MCF 10A (cell line): ENCODE measurements at regions of chr22 and their contacts with region 1.

Region 1: DNA sequence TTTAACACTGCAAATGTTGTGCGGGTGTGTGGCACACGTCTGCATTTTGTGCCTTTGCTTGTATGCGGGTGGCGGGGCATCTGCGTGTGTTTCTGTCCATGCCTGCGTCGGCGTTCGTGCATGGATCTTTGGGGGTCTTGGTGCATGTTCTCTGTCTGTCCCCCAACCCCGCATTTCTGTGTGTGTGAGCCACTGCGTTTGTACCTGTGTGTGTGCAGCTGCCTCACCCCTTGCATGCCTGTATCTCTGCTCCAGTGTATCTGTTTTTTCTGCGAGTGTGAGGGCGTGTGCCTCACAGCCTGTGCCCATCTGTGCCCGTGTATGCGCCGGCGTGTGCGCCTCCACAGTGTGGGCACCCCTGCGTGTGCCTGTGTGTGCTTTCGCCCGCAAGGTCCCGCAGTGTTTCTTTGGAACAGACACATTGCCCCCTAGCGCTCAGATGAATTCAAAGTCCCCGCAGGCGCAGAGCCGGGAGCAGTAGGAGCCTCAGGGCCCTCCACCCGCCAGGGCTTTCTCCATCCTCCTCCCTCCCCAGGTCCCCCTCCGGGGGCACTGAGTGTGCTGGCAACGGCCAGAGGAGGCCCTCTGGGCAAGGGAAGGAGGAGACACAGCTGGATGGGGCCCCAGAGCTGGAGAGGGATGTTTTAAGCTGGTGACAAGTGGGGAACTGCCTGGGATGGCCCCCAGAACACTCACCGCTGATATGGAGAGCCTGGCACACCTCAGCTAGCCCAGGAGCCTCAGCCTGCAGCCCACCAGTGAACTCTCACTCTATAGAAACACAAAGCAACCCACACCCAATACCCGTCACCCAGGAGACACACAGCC is 3.1 kb upstream of the MN1 start:
- DNase-seq: peak; percentile 51
- H3K4me3 Mint-ChIP-seq: no peak overlapping the region
- H3K27ac Mint-ChIP-seq: no peak overlapping the region
- H3K4me1 Mint-ChIP-seq: peaks cover 11% of the 10 kb centered on the region
- H3K27me3 Mint-ChIP-seq: no peaks in the 10 kb centered on the region
- CTCF ChIP-seq: peak; percentile 28

Region 2: GRCh38 chr22:26672590-26673468 is 1131.9 kb before region 1 on chr22:
- CTCF ChIA-PET with region 1: no interaction called
- POLR2A ChIA-PET with region 1: no interaction called
- intact Hi-C with region 1: loop called (anchors 10 kb)
- DNase-seq: peak; percentile 94
- H3K4me3 Mint-ChIP-seq: peak overlapping the region; percentile 89
- H3K27ac Mint-ChIP-seq: peak overlapping the region; percentile 99
- H3K4me1 Mint-ChIP-seq: peaks cover 37% of the 10 kb centered on the region
- H3K27me3 Mint-ChIP-seq: no peaks in the 10 kb centered on the region
- CTCF ChIP-seq: peak; percentile 37

Region 3: GRCh38 chr22:26835929-26836528 is 968.7 kb before region 1 on chr22:
- CTCF ChIA-PET with region 1: no interaction called
- POLR2A ChIA-PET with region 1: no interaction called
- intact Hi-C with region 1: loop called (anchors 5 kb)
- DNase-seq: peak; percentile 67
- H3K4me3 Mint-ChIP-seq: no peak overlapping the region
- H3K27ac Mint-ChIP-seq: no peak overlapping the region
- H3K4me1 Mint-ChIP-seq: no peaks in the 10 kb centered on the region
- H3K27me3 Mint-ChIP-seq: peaks cover 73% of the 10 kb centered on the region
- CTCF ChIP-seq: peak; percentile 83

Region 4: DNA sequence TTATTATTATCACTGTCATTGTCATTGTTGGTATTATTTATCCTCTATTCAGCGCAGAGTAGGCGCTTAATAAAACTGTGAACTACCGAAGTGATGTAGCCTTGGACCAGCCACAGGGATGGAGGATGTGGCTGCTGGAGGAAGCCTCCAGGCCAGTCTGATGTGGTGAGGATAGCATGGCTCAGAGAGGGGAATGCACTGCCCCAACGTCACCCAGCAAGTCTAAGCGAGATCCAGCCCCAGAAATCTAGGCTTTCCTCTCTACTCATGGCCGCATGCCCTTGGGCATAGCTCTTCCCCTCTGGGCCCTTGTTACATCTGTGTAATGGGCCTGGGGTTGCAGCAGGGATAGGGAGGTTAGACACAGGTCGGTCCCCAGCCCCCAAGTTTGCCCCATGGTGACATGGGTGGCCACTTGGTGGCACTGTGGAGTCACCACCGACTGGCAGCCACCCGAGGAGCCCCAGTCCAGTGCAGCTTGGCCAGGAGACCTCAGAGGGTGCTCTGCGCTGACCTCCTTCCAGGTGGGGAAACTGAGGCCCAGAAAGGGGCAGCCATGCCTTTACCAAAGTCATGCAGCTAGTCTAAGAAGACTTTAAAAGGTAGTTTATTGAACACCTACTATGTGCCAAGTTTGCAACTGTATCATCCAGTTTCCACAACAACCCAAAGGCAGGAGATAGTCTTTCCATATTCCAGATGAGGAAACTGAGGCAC is 398.9 kb before region 1 on chr22:
- CTCF ChIA-PET with region 1: interaction called, 7 read pairs
- POLR2A ChIA-PET with region 1: no interaction called
- intact Hi-C with region 1: loop called (anchors 1 kb)
- DNase-seq: peak; percentile 69
- H3K4me3 Mint-ChIP-seq: no peak overlapping the region
- H3K27ac Mint-ChIP-seq: peak overlapping the region; percentile 70
- H3K4me1 Mint-ChIP-seq: peaks cover 16% of the 10 kb centered on the region
- H3K27me3 Mint-ChIP-seq: no peaks in the 10 kb centered on the region
- CTCF ChIP-seq: peak; percentile 87

Region 5: DNA sequence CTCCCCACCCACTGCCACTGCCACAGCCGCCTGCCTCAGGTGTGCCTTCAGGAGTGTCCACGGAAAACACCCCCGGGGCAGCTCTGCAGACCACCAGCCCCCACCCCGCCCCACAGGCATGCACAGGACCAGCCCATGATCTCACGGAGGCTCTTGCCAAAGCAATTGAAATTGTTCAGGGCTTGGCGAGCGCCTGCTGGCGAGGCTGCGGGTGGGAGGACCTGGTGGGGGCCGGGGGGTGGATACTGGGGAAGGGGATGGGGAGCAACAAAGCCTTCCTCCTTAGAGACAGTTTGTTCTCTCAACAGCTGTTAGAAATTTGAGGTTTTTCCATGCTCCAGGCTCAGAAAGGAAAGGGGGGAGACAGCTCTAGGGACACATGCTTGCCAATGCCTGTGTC is 277.8 kb before region 1 on chr22:
- CTCF ChIA-PET with region 1: no interaction called
- POLR2A ChIA-PET with region 1: no interaction called
- intact Hi-C with region 1: no loop called
- DNase-seq: no peak
- H3K4me3 Mint-ChIP-seq: no peak overlapping the region
- H3K27ac Mint-ChIP-seq: no peak overlapping the region
- H3K4me1 Mint-ChIP-seq: peaks cover 3% of the 10 kb centered on the region
- H3K27me3 Mint-ChIP-seq: no peaks in the 10 kb centered on the region
- CTCF ChIP-seq: no peak

Region 6: DNA sequence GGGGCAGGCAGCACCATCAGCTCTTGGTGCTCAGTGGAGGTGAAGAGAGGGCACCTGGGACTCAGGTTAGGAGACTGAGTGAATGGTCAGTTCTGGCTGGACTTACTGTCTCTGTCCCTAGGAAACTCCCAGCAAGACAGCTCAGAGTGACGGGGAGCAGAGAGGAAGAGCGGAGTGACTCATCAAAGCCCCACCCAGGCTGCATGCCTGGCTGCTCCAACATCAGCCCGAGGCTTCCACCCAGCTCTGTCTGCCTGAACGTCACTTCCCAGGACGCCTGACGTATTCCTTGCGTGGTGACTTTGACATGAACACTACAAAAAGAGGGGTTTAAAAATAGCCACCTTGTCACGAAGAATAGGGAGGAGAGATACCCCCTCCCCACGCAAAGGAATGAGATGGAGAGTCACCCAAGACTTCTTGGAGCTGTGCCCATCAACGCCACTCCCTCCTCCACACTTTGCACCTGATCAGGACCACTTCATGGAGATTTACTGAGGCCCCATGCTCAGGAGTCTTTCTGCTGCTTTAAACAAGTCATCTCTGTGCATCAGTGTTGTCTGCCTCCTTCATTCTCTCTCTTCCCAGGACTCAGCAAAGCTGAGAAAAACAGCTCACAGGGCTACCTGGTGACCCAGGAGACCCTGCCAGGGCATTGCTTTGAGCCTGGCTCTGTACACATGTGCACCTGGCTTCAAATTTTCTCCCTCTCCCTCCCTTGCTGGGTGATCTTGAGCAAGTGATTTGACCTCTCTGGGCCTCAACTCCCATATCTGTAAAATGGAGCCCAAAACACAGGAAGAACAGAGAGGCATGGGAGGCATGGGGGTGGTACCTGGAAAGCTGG is 86.3 kb before region 1 on chr22:
- CTCF ChIA-PET with region 1: interaction called, 4 read pairs
- POLR2A ChIA-PET with region 1: no interaction called
- intact Hi-C with region 1: loop called (anchors 1 kb)
- DNase-seq: peak; percentile 91
- H3K4me3 Mint-ChIP-seq: peak overlapping the region; percentile 24
- H3K27ac Mint-ChIP-seq: peak overlapping the region; percentile 98
- H3K4me1 Mint-ChIP-seq: peaks cover 30% of the 10 kb centered on the region
- H3K27me3 Mint-ChIP-seq: no peaks in the 10 kb centered on the region
- CTCF ChIP-seq: no peak

Region 7: DNA sequence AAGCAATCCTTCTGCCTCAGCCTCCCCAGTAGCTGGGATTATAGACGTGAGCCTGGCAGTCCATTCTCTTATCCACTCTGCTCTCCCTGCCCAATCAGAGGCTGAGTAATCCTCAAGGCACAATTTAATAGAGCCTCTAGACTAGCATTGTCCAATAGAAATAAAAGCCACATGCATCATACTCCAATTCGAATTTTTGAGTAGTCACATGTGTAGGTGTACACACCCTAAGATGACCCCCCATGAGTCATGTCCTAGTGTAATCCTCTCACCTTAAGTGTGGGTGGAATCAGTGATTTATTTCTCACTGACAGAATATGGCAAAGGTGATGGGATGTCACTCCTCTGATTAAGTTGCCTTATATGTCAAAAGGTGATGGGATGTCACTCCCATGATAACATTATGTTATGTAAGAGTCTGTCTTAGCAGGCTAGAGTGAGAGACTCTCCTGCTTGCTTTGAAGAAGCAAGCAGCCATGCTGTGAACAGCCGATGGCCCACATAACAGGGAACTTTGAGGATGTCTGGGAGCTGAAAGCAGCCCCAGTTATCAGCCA is 64.4 kb before region 1 on chr22:
- CTCF ChIA-PET with region 1: no interaction called
- POLR2A ChIA-PET with region 1: no interaction called
- intact Hi-C with region 1: no loop called
- DNase-seq: no peak
- H3K4me3 Mint-ChIP-seq: no peak overlapping the region
- H3K27ac Mint-ChIP-seq: no peak overlapping the region
- H3K4me1 Mint-ChIP-seq: no peaks in the 10 kb centered on the region
- H3K27me3 Mint-ChIP-seq: no peaks in the 10 kb centered on the region
- CTCF ChIP-seq: no peak

Region 8: DNA sequence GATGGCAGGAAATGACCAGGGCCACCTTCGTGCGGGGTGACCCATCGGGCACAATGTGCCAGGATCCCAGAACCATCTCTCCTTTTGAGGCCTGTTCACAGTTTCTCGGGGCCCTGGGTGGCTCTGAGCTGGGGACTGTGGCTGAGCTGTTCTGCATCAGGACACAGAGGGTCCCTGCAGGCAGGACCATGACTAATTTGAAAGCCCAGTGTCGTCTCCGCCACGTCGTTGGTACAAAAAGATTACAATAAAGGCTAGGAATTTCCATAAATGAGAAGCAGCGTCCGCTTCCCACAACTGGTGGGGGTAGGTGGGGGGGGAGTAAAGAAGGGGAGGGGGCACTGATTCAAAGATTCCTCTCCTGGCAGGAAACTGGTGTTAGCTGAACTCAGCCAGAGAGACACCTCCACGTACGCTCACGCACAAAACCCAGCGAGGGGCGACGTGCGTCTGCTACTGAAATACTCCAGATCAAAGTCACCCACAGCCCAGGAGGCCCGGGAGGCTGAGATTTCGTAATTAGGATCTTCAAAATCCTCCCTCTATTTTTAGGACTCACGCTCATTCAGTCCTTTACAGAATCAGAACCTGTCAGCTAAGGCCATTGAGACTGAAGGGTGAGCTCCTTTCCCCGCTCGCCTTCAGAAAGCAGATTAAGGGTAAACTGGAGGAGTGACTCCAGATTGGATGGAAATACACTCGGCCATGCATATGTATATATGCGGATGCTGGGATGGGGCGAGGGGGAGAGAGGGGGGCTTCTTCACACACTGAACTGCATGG is 14.1 kb before region 1 on chr22:
- CTCF ChIA-PET with region 1: no interaction called
- POLR2A ChIA-PET with region 1: no interaction called
- intact Hi-C with region 1: no loop called
- DNase-seq: no peak
- H3K4me3 Mint-ChIP-seq: no peak overlapping the region
- H3K27ac Mint-ChIP-seq: no peak overlapping the region
- H3K4me1 Mint-ChIP-seq: peaks cover 11% of the 10 kb centered on the region
- H3K27me3 Mint-ChIP-seq: no peaks in the 10 kb centered on the region
- CTCF ChIP-seq: no peak

Region 9: GRCh38 chr22:28009272-28009827 is 204.7 kb after region 1 on chr22:
- CTCF ChIA-PET with region 1: no interaction called
- POLR2A ChIA-PET with region 1: no interaction called
- intact Hi-C with region 1: loop called (anchors 10 kb)
- DNase-seq: peak; percentile 73
- H3K4me3 Mint-ChIP-seq: no peak overlapping the region
- H3K27ac Mint-ChIP-seq: no peak overlapping the region
- H3K4me1 Mint-ChIP-seq: no peaks in the 10 kb centered on the region
- H3K27me3 Mint-ChIP-seq: no peaks in the 10 kb centered on the region
- CTCF ChIP-seq: peak; percentile 97